ENCODE measurements at regions of chr18 and their contacts with region 1.

Region 1: GRCh38 chr18:35616664-35617423 is 35.3 kb downstream of the GALNT1 start:
- DNase-seq: peak in 8 of 9 donors; percentile 44 to 74 (median 69)
- ATAC-seq: peak; percentile 95
- H3K4me3 ChIP-seq: peak overlapping the region; percentile 43
- H3K4me3 Mint-ChIP-seq: no peak overlapping the region
- H3K27ac ChIP-seq: peak overlapping the region; percentile 70
- H3K27ac Mint-ChIP-seq: no peak overlapping the region
- H3K4me1 ChIP-seq: peaks cover 7 to 16% of the 10 kb centered on the region in 2 donors
- H3K4me1 Mint-ChIP-seq: peaks cover 7 to 25% (median 14%) of the 10 kb centered on the region in 7 donors
- H3K27me3 ChIP-seq: no peaks in the 10 kb centered on the region
- H3K27me3 Mint-ChIP-seq: no peaks in the 10 kb centered on the region

Region 2: GRCh38 chr18:35535297-35535696 is 81.5 kb before region 1 on chr18:
- CTCF ChIA-PET with region 1: no interaction called
- POLR2A ChIA-PET with region 1: no interaction called
- intact Hi-C with region 1: no loop called
- DNase-seq: no peak
- ATAC-seq: no peak
- H3K4me3 ChIP-seq: no peak overlapping the region
- H3K4me3 Mint-ChIP-seq: no peak overlapping the region
- H3K27ac ChIP-seq: no peak overlapping the region
- H3K27ac Mint-ChIP-seq: no peak overlapping the region
- H3K4me1 ChIP-seq: no peaks in the 10 kb centered on the region
- H3K4me1 Mint-ChIP-seq: no peaks in the 10 kb centered on the region
- H3K27me3 ChIP-seq: no peaks in the 10 kb centered on the region
- H3K27me3 Mint-ChIP-seq: peaks cover 9 to 24% (median 16%) of the 10 kb centered on the region in 5 donors

Region 3: GRCh38 chr18:35573531-35573930 is 43.3 kb before region 1 on chr18:
- CTCF ChIA-PET with region 1: no interaction called
- POLR2A ChIA-PET with region 1: interaction called, 11 read pairs
- intact Hi-C with region 1: no loop called
- DNase-seq: peak in 2 of 9 donors; percentile 12 to 16
- ATAC-seq: peak; percentile 38
- H3K4me3 ChIP-seq: no peak overlapping the region
- H3K4me3 Mint-ChIP-seq: no peak overlapping the region
- H3K27ac ChIP-seq: no peak overlapping the region
- H3K27ac Mint-ChIP-seq: peak overlapping the region in 4 of 9 donors; percentile 1 to 69 (median 1)
- H3K4me1 ChIP-seq: no peaks in the 10 kb centered on the region
- H3K4me1 Mint-ChIP-seq: peaks cover 8 to 20% (median 12%) of the 10 kb centered on the region in 7 donors
- H3K27me3 ChIP-seq: no peaks in the 10 kb centered on the region
- H3K27me3 Mint-ChIP-seq: peaks cover 0 to 17% (median 8%) of the 10 kb centered on the region in 5 donors

Region 4: GRCh38 chr18:35580701-35581539 is 35.9 kb before region 1 on chr18:
- CTCF ChIA-PET with region 1: interaction called, 3 read pairs
- POLR2A ChIA-PET with region 1: interaction called, 3 read pairs
- intact Hi-C with region 1: loop called (anchors 1 to 2 kb)
- DNase-seq: peak; percentile 54 to 70 (median 63)
- ATAC-seq: peak; percentile 84
- H3K4me3 ChIP-seq: peak overlapping the region; percentile 61
- H3K4me3 Mint-ChIP-seq: peak overlapping the region; percentile 60 to 80 (median 72)
- H3K27ac ChIP-seq: peak overlapping the region; percentile 77
- H3K27ac Mint-ChIP-seq: peak overlapping the region in 5 of 9 donors; percentile 37 to 80 (median 63)
- H3K4me1 ChIP-seq: peaks cover 11% of the 10 kb centered on the region in 2 donors
- H3K4me1 Mint-ChIP-seq: peaks cover 13 to 39% (median 28%) of the 10 kb centered on the region in 7 donors
- H3K27me3 ChIP-seq: no peaks in the 10 kb centered on the region
- H3K27me3 Mint-ChIP-seq: peaks cover 0 to 18% (median 7%) of the 10 kb centered on the region in 5 donors

Region 5: DNA sequence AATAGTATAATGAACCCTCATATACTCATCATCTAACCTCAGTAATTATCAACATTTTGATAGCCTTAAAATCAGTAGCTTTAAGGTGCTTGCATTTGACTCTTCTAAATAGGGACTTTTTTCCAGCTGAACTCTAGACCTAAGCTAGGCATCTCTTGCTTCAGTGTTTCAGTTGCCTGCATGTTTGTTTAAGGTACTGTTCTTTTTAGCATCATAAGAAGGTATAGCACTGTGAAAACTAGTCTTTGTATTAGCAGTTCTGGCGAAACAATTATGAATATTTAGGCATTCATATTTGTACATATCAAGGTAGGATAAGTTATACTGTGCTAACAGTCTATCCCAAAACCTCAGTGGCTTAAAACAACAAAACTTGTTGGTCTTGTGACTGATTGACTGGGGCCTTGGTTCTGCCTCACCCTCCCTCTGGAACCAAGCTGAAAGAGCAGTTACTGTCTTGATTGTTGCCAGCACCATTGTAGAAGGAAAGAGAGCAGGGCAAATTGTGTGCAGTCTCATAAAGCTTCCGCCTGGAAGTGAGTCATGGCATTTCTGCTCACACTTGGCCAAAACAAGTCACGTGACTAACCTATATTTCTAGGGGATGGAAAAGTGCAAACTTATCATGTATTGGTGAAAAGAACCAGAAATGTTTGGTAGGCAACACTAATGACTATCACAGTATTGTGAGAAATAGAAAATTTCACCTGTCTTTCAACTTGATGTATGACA is 11.0 kb before region 1 on chr18:
- CTCF ChIA-PET with region 1: interaction called, 3 read pairs
- POLR2A ChIA-PET with region 1: no interaction called
- intact Hi-C with region 1: loop called in 1 of 2 experiments (anchors 2 kb)
- DNase-seq: no peak
- ATAC-seq: no peak
- H3K4me3 ChIP-seq: no peak overlapping the region
- H3K4me3 Mint-ChIP-seq: no peak overlapping the region
- H3K27ac ChIP-seq: no peak overlapping the region
- H3K27ac Mint-ChIP-seq: peak overlapping the region in 2 of 9 donors; percentile 8 to 21
- H3K4me1 ChIP-seq: no peaks in the 10 kb centered on the region
- H3K4me1 Mint-ChIP-seq: peaks cover 7 to 49% (median 32%) of the 10 kb centered on the region in 7 donors
- H3K27me3 ChIP-seq: no peaks in the 10 kb centered on the region
- H3K27me3 Mint-ChIP-seq: no peaks in the 10 kb centered on the region

Measured in naive thymus-derived CD4-positive, alpha-beta T cell (primary cell).